Right ventricle myocardium superior (tissue), 1 donor: ENCODE measurements at regions of chr6 and their contacts with region 1.

Region 1: DNA sequence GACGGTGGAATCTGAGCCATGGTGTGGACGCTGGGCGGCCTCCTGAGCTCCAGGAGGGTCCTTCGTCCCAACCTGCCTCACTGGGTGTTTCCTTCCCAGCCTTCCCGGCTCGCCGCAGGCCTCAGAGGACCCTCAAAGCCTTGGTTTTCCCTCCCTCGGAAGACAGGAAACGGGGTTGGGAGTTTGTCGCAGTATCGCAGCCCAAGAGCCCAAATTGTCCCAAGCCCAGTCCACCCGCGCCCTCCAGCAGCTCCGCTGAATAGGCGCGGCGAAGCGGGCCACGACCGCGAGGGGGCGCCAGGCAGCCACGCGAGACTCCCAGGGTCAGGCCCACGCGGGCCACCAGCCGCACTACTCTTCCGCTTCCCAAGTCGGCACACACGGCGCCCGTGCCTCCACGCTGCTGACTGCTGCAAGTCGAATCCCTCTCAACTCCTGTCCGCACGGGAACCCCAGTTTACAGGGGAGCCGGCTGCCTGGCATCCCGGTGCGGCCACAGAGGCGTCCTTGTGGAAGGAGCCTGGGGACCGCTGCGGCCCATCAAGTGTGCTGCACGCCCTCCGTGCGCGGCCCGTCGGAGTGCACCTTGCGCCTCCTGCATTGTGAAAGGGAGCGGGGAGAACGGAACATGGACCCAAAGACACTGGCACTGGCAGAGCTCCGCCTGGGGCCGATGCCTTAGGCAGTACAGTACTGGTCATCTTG is 40.4 kb upstream of the HMGA1 start:
- DNase-seq: peak; percentile 95
- ATAC-seq: peak; percentile 100

Region 2: DNA sequence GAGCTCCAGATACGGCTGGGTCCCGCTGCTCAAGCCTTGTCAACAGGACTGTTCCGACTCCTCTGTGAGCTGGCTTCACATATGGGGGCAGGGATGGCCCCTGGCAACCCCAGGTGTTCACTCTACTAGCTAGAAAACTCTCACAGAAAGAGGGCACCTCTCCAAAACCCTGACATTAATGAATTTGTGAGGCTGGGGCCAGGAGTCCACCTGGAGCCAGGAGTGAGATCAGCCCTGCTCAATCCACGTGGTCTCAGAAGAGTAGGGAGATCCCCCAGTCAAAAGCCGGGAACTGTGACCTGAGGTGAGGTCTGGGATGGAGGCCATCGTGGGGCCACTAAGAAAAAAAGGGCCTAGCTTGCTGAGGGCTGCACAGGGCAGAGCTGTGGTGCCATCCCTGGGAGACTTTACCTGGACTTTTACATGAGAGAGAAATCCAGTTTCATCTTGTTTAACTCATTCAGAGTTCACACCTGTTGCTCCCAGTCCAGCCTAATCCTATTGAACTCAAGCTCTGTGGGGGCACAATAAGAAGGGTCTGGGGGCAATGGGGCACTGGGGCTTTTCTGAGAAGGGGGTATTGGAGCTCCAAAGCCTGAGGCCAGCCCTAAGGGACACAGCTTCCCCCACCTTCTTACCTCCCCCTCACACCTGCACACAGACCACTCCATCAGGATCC is 248.2 kb before region 1 on chr6:
- intact Hi-C with region 1: no loop called
- DNase-seq: no peak
- ATAC-seq: no peak

Region 3: DNA sequence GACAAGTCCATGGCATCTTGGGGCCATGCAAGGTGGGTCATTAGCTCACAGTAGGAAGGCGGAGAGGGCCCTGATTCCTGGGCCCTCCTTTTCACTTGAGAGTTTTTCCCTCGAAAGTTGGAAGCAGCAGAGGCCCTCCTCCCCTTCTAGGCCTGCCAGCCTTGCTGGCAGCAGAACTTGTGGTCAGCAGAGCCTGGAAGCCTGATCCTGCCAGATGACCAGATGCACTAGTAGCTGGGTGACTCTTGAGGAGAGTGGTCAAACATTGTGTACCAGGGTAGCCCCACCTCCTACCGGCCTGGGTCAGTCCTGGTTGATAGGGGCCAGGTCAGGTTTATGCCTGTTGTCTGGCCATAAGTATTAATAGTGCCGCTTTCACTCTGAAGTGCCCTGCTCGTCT is 36.6 kb after region 1 on chr6:
- intact Hi-C with region 1: loop called (anchors 5 kb)
- DNase-seq: no peak
- ATAC-seq: no peak

Region 4: GRCh38 chr6:34414999-34415858 is 219.0 kb after region 1 on chr6:
- intact Hi-C with region 1: loop called (anchors 5 kb)
- DNase-seq: no peak
- ATAC-seq: peak; percentile 93